Panc1 (cell line): ENCODE measurements at regions of chr14 and their contacts with region 1.

Region 1: GRCh38 chr14:35121887-35122695 is at the starts of genes PPP2R3C and PRORP:
- DNase-seq: peak; percentile 89
- ATAC-seq: peak; percentile 95
- H3K4me3 ChIP-seq: peak within 1 kb of the TSS; percentile 87 to 94
- H3K27ac ChIP-seq: peak within 1 kb of the TSS; percentile 99
- H3K4me1 ChIP-seq: peaks cover 17% of the 10 kb centered on the region; the same call in 1 of the 2 replicates
- H3K27me3 ChIP-seq: no peaks in the 10 kb centered on the region
- CTCF ChIP-seq: no peak
- total RNA-seq, gene PPP2R3C: 19.6 TPM
- total RNA-seq, gene PRORP: 28.1 TPM

Region 2: DNA sequence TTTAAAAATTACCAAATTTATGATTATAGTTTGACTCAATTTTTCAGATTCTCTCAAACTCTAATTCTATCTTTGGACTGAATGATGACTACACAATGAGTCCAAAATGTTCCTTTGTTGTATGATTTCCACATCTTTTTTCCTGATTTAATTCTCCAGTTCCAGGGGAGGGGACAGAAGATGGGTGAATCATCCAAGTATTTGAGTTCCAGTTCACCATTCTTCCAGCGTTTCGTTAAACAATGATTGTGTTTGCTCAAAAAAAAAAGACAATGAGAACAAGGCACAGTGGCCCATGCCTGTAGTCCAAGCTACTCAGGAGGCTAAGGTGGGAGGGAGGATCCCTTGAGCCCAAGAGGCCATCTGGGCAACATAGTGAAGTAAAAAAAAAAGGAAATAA is 270.7 kb before region 1 on chr14:
- CTCF ChIA-PET with region 1: no interaction called
- POLR2A ChIA-PET with region 1: interaction called, 14 read pairs
- in situ Hi-C with region 1: no loop called
- intact Hi-C with region 1: no loop called
- DNase-seq: no peak
- ATAC-seq: no peak
- H3K4me3 ChIP-seq: no peak overlapping the region
- H3K27ac ChIP-seq: no peak overlapping the region
- H3K4me1 ChIP-seq: no peaks in the 10 kb centered on the region
- H3K27me3 ChIP-seq: no peaks in the 10 kb centered on the region
- CTCF ChIP-seq: no peak